GM12878 (cell line): ENCODE measurements at regions of chr14 and their contacts with region 1.

Region 1: GRCh38 chr14:52325126-52325525 is 11.0 kb downstream of the PTGER2 start:
- DNase-seq: peak; percentile 92
- ATAC-seq: peak; percentile 97
- H3K4me3 ChIP-seq: no peak overlapping the region
- H3K27ac ChIP-seq: no peak overlapping the region
- H3K4me1 ChIP-seq: peaks cover 27% of the 10 kb centered on the region
- H3K27me3 ChIP-seq: no peaks in the 10 kb centered on the region; a peak in 1 of 4 replicates
- CTCF ChIP-seq: no peak
- EP300 ChIP-seq: peak; percentile 41 to 83; a peak in 3 of 4 replicates
- POLR2A ChIP-seq: no peak
- RAD21 ChIP-seq: no peak

Region 2: GRCh38 chr14:52380294-52380693 is 55.2 kb after region 1 on chr14:
- CTCF ChIA-PET with region 1: no interaction called
- POLR2A ChIA-PET with region 1: no interaction called
- RAD21 ChIA-PET with region 1: no interaction called
- SMC1A ChIA-PET with region 1: no interaction called
- in situ Hi-C with region 1: no loop called
- intact Hi-C with region 1: loop called (anchors 5 kb)
- DNase-seq: peak; percentile 25
- ATAC-seq: peak; percentile 97
- H3K4me3 ChIP-seq: no peak overlapping the region
- H3K27ac ChIP-seq: no peak overlapping the region
- H3K4me1 ChIP-seq: no peaks in the 10 kb centered on the region; the same call in 1 of the 2 replicates
- H3K27me3 ChIP-seq: no peaks in the 10 kb centered on the region; a peak in 1 of 4 replicates
- CTCF ChIP-seq: no peak
- EP300 ChIP-seq: no peak
- POLR2A ChIP-seq: no peak
- RAD21 ChIP-seq: no peak

Region 3: DNA sequence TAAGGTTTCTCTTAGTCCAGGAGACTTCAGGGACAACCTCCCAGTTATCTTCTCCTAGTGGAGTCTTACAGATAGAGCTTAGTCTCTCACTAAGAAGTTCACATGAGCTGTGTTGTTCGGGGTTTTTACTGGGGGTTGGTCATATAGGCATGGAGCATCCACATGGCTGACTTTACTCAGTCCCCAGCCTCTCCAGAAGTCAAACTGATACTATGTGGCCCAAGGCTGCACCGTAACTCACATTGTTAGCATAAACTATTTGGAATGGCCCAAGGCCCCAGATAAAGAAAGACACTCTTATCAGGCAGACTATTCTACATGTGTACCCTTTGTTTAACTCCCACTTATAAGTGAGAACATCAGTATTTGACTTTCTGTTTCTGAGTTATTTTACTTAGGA is 250.7 kb after region 1 on chr14:
- CTCF ChIA-PET with region 1: no interaction called
- POLR2A ChIA-PET with region 1: no interaction called
- RAD21 ChIA-PET with region 1: no interaction called
- SMC1A ChIA-PET with region 1: no interaction called
- in situ Hi-C with region 1: no loop called
- intact Hi-C with region 1: no loop called
- DNase-seq: no peak
- ATAC-seq: no peak
- H3K4me3 ChIP-seq: no peak overlapping the region
- H3K27ac ChIP-seq: no peak overlapping the region
- H3K4me1 ChIP-seq: no peaks in the 10 kb centered on the region
- H3K27me3 ChIP-seq: no peaks in the 10 kb centered on the region
- CTCF ChIP-seq: no peak
- EP300 ChIP-seq: no peak
- POLR2A ChIP-seq: no peak
- RAD21 ChIP-seq: no peak